ENCODE measurements at regions of chr17 and their contacts with region 1.

Region 1: DNA sequence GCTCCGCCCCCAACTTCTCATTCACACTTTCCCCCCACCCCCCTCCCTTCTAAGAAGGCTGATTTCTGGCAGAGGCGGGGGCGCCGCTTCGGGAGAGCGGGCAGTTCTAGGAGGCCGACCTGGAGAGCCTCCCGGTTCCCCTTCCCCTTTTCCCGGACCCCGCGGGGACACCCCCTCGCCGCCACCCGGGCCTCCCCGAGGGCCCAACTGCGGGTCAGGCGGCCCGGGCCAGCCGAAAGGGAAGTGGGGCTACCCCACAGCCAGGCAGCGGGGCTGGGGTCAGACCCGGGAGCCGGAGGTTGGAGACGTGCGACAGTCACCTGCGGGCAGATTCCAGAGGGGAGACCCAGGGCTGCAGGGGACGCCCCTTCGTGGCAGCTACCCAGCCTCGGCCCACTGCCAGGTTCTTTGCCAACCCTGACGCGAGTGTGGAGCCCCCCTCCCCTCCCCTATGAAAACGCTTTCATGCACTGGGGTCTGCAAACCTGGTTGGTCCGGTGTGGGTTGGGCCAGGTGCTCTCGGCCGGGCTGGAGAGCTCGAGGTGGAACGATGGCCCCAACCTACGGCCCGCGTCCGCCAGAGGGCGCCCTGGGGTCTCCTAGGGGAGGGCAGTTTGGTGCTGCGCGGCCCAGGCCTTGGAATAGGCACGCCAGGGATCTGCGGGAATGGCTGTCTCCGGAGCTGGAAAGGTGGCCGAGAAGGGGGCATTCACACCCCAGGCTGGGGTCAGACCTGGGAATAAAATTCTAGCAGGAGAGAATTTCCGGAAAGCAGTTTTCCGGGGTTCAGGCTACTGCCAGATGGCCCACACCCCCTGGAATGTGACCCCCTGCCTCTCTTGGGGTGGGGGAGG is 721 bp upstream of the SOCS3 start:
- DNase-seq: peak; percentile 100
- ATAC-seq: peak; percentile 59
- H3K4me3 Mint-ChIP-seq: peak overlapping the region; percentile 74
- H3K27ac Mint-ChIP-seq: peak overlapping the region; percentile 93
- H3K4me1 Mint-ChIP-seq: peaks cover 71% of the 10 kb centered on the region
- H3K27me3 Mint-ChIP-seq: peaks cover 16% of the 10 kb centered on the region
- CTCF ChIP-seq: peak; percentile 94

Region 2: GRCh38 chr17:78196712-78197111 is 163.9 kb before region 1 on chr17:
- CTCF ChIA-PET with region 1: no interaction called
- POLR2A ChIA-PET with region 1: no interaction called
- DNase-seq: no peak
- ATAC-seq: no peak
- H3K4me3 Mint-ChIP-seq: no peak overlapping the region
- H3K27ac Mint-ChIP-seq: peak overlapping the region; percentile 72; the same call in 1 of the 2 replicates
- H3K4me1 Mint-ChIP-seq: peaks cover 29% of the 10 kb centered on the region
- H3K27me3 Mint-ChIP-seq: no peaks in the 10 kb centered on the region
- CTCF ChIP-seq: no peak

Region 3: GRCh38 chr17:78272181-78272913 is 88.3 kb before region 1 on chr17:
- CTCF ChIA-PET with region 1: interaction called, 12 read pairs
- POLR2A ChIA-PET with region 1: no interaction called
- DNase-seq: peak; percentile 67
- ATAC-seq: peak; percentile 62
- H3K4me3 Mint-ChIP-seq: no peak overlapping the region
- H3K27ac Mint-ChIP-seq: peak overlapping the region; percentile 53
- H3K4me1 Mint-ChIP-seq: peaks cover 48% of the 10 kb centered on the region
- H3K27me3 Mint-ChIP-seq: peaks cover 2% of the 10 kb centered on the region; the same call in 1 of the 2 replicates
- CTCF ChIP-seq: no peak

Region 4: DNA sequence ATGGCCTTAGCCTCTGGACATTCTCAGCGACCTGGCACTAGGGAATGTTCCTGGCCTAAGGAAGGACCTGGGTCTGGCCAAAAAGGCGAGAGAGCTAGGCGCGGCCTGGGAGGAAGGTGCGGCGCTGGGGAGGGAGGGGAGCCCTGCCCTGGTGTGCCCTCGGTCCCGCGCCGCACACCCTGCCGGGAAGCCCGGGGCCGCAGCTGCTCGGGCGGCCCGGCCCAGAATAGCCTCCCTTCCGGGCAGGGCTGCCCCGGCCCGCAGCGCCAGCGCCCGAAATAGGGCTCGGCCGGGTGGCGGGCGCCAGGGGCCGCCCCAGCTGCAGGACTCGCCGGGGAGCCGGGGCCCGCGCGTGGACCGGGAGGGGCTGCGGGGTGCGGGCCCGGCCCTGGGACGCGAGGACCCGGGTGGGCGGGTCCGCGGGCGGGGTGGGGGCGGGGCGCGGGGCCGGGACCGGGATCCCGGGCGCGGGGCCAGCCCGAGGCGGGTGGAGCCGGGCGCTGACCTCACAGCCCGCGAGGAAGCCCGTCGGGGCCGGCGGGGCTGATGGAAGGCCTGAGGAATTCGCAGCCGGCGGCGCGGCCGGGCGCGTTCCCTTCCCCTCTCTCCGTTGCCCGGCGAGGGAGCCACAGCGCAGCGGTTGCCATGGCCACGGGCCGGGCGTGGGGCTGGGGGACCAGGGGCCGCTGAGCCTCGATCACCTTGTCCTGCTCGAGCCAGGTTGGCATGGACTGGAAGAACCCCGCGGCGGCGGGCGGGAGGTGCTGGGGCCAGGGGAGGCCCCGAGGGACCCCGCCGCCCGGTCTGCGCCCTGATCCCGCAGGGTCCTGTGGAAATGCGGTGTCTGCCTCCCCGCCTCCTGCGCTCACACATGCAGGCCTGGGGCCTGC is 18.8 kb before region 1 on chr17:
- CTCF ChIA-PET with region 1: interaction called, 39 read pairs
- POLR2A ChIA-PET with region 1: no interaction called
- DNase-seq: peak; percentile 75
- ATAC-seq: peak; percentile 57
- H3K4me3 Mint-ChIP-seq: peak overlapping the region; percentile 56
- H3K27ac Mint-ChIP-seq: no peak overlapping the region
- H3K4me1 Mint-ChIP-seq: peaks cover 25% of the 10 kb centered on the region
- H3K27me3 Mint-ChIP-seq: peaks cover 19% of the 10 kb centered on the region
- CTCF ChIP-seq: no peak

Region 5: DNA sequence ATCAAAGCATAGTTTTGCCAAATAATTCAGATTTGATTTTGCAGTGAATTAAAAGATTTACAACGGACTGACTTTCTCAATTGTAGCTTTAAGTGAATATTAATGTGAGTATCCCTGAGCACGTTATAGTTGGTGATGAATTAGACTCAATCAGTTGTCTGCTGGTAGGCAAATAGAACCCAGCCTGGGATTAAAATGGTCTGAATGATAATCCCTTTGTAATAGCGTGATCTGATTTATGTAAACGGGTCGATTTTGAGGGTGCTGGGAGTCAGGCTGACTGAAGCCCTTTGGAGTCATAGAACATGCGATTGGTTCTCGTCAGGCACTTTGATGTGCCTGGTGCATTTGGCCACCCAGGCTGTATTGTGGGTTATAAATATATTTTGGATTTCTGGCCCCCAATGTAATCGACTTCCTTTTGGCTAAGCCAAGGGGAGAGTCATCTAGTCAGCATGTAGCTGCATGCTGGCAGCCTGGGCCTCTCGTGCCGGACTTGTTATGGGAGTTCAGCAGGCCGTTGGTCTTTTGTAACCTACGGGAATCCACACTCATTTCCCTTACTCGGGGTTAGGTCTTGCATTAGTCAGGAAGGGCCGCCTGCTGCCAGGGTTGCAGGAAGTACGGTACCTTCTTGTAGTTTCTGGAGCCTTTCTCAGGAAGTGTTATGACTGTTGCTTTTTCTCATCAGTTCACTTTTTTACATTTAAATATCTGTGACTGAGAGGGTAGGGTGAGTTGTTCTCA is 23.3 kb after region 1 on chr17:
- CTCF ChIA-PET with region 1: interaction called, 86 read pairs
- POLR2A ChIA-PET with region 1: no interaction called
- DNase-seq: no peak
- ATAC-seq: peak; percentile 9; the same call in 1 of the 2 replicates
- H3K4me3 Mint-ChIP-seq: no peak overlapping the region
- H3K27ac Mint-ChIP-seq: peak overlapping the region; percentile 82
- H3K4me1 Mint-ChIP-seq: peaks cover 80% of the 10 kb centered on the region
- H3K27me3 Mint-ChIP-seq: no peaks in the 10 kb centered on the region
- CTCF ChIP-seq: no peak

Region 6: DNA sequence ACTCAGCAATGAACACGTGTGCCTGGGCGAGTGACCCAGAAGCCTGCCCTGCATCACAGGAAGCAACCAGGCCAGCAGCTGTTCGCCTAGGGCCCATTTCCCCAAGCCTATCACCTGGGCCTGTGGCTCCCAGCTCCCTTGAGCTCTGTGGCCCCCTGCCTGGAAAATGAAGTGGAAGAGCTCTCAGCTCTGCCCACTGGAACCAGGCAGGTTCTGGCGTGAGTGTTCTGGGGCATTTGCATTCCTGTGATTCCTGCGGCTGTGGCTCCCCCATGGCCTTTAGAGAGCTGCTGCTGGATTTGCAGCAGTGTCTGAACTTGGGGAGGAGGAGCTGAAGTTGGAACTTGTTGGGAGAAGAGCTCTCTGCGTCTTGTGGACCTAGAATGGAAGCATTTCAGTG is 40.6 kb after region 1 on chr17:
- CTCF ChIA-PET with region 1: interaction called, 10 read pairs
- POLR2A ChIA-PET with region 1: no interaction called
- DNase-seq: no peak
- ATAC-seq: no peak
- H3K4me3 Mint-ChIP-seq: no peak overlapping the region
- H3K27ac Mint-ChIP-seq: peak overlapping the region; percentile 45; the same call in 1 of the 2 replicates
- H3K4me1 Mint-ChIP-seq: no peaks in the 10 kb centered on the region
- H3K27me3 Mint-ChIP-seq: no peaks in the 10 kb centered on the region
- CTCF ChIP-seq: no peak

Region 7: DNA sequence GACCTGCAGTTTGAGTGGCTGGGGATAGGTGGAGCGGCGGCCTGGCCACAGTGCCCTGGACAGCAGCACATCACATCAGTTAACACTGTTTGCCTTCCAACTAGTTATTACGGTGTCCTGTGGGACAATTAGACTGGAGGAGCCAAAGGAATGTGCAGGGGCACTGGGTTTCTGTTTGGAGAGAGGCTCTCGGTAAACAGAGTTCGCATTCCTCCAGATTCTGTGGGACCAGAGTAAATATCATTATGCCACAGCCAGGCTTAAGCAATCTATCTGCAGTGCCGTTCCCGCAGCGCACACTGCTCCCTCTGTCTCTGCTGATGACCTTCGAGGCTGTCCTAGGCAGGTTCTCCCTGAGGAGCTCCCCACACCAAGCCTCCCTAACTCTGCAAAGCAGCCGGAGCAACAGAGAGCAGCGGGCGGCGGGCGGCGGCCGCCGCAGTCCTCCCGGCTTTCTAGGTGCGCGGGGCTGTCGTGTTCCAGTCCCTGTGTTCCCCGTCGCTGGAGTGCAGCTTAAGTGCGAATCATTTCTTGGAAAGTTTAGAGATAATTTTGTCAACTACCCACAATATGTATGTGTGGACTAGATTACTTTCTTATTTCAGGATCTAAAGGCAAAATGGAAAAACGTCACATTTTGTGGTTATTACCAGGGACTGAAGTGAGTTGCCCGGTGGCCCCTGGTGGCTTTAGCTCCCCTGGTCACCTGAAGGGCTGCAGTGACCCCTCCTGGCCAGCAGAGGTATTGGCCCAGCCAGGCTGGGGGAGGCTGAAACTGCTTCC is 61.1 kb after region 1 on chr17:
- CTCF ChIA-PET with region 1: interaction called, 115 read pairs
- POLR2A ChIA-PET with region 1: interaction called, 8 read pairs
- DNase-seq: peak; percentile 91
- ATAC-seq: peak; percentile 84
- H3K4me3 Mint-ChIP-seq: no peak overlapping the region
- H3K27ac Mint-ChIP-seq: peak overlapping the region; percentile 91
- H3K4me1 Mint-ChIP-seq: peaks cover 17% of the 10 kb centered on the region
- H3K27me3 Mint-ChIP-seq: no peaks in the 10 kb centered on the region
- CTCF ChIP-seq: peak; percentile 92

Measured in WTC11 (cell line).